ENCODE measurements at regions of chr3 and their contacts with region 1.

Region 1: DNA sequence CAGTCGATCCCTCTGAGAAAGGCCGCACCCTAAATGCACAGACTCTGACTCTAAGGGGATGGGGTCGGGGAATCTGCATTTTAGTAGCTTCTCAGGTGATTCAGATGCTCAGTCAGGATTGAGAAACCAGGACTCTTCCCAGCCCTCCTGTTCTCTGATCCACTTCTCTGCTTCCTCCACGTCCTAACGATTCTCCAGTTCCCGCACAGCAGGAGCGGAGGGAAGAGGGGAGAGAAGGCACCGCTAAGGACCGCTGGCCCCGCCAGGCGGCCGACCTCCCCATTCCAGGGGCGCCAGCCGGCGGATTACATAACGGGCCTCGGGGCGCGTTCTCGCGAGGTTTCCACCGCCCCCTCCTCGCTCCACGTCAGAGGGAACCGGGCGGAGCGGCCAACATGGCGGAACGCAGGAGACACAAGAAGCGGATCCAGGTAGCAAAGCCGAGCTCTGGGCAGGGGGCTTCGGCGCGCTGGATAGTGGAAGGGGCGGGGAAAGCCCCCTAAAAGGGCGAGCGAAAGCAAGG is at the start of gene SEC62:
- DNase-seq: peak; percentile 93 to 95 (median 94)
- H3K4me3 ChIP-seq: peak within 1 kb of the TSS; percentile 78 to 88 (median 81)
- H3K4me3 Mint-ChIP-seq: peak within 1 kb of the TSS; percentile 93 to 94
- H3K27ac ChIP-seq: peak within 1 kb of the TSS; percentile 95 to 98
- H3K27ac Mint-ChIP-seq: peak within 1 kb of the TSS; percentile 96 to 99 (median 98)
- H3K4me1 ChIP-seq: peaks cover 27 to 36% of the 10 kb centered on the region in 2 donors
- H3K4me1 Mint-ChIP-seq: peaks cover 46% of the 10 kb centered on the region
- H3K27me3 ChIP-seq: no peaks in the 10 kb centered on the region
- H3K27me3 Mint-ChIP-seq: peaks cover 0 to 2% (median 2%) of the 10 kb centered on the region in 3 donors
- CTCF ChIP-seq: peak; percentile 59
- polyA plus RNA-seq, gene SEC62: 15.6 to 117 (median 95.2) TPM

Region 2: DNA sequence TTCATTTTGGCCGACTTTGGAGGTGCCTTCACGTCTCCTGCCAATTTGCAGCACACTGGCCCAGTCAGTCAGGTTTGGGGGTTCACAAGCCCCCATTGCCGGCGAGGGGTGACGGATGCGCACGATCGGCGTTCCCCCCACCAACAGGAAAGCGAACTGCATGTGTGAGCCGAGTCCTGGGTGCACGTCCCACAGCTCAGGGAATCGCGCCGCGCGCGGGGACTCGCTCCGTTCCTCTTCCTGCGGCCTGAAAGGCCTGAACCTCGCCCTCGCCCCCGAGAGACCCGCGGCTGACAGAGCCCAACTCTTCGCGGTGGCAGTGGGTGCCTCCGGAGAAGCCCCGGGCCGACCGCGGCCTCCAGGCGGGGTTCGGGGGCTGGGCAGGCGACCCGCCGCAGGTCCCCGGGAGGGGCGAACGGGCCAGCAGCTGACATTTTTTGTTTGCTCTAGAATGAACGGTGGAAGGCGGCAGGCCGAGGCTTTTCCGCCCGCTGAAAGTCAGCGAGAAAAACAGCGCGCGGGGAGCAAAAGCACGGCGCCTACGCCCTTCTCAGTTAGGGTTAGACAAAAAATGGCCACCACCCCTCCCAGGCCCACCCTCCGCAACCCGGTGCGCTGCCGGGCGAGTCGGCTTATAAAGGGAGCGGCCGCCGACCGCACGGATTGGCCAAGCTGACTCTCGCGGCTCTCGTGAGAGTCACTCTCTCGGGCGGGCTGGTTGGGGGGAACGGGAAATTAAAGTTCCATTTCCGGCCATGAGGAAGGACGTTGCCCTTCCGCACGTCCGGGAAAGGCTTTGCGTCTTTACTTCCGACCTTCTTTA is 201.8 kb before region 1 on chr3 and contains the start of gene TERC:
- intact Hi-C with region 1: loop called (anchors 5 to 10 kb)
- DNase-seq: peak; percentile 80 to 89 (median 81)
- H3K4me3 ChIP-seq: peak within 1 kb of the TSS; percentile 70 to 95 (median 79)
- H3K4me3 Mint-ChIP-seq: peak within 1 kb of the TSS; percentile 98 to 99
- H3K27ac ChIP-seq: peak within 1 kb of the TSS; percentile 88 to 93
- H3K27ac Mint-ChIP-seq: peak within 1 kb of the TSS; percentile 91 to 99 (median 96)
- H3K4me1 ChIP-seq: peaks cover 12 to 14% of the 10 kb centered on the region in 2 donors
- H3K4me1 Mint-ChIP-seq: peaks cover 12% of the 10 kb centered on the region
- H3K27me3 ChIP-seq: no peaks in the 10 kb centered on the region
- H3K27me3 Mint-ChIP-seq: peaks cover 2 to 6% (median 3%) of the 10 kb centered on the region in 3 donors
- CTCF ChIP-seq: no peak
- polyA plus RNA-seq, gene TERC: 0.33 to 0.76 TPM in 2 of 3 donors, not detected in the other

Region 3: DNA sequence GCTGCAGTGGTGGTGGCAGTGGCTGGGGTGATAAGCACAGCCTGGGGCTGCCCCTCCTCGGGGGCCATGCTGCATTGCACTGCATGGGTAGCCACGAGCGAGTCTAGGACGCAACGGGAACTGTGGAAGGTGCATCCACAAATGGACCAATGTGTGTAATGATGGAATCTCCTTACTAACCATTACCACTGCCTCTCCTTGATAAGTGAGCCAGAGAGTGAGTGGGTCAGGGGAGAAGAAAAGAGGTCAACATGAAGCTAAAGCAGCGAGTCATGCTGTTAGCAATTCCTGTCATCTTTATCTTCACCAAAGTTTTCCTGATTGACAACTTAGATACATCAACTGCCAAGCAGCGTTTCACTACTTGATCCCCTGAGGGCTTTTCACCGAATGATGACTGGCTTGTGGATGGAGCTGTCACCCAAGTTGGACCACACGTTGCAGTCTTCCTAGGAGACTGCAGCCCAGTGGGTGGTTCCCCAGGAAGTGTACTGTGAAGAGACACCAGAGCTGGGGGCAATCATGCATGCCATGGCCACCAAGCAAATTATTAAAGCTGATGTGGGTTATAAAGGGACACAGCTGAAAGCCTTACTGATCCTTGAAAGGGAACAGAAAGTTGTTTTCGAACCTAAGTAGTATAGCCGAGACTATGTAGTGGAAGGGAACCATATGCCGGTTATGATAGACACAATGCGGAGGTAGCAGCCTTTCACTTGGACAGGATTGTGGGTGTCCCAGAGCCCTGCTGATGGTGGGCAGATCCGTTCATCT is 34.6 kb before region 1 on chr3:
- intact Hi-C with region 1: loop called (anchors 5 kb)
- DNase-seq: no peak
- H3K4me3 ChIP-seq: no peak overlapping the region
- H3K4me3 Mint-ChIP-seq: no peak overlapping the region
- H3K27ac ChIP-seq: no peak overlapping the region
- H3K27ac Mint-ChIP-seq: no peak overlapping the region
- H3K4me1 ChIP-seq: peaks cover 0 to 3% of the 10 kb centered on the region in 2 donors
- H3K4me1 Mint-ChIP-seq: peaks cover 4% of the 10 kb centered on the region
- H3K27me3 ChIP-seq: no peaks in the 10 kb centered on the region
- H3K27me3 Mint-ChIP-seq: peaks cover 0 to 10% (median 2%) of the 10 kb centered on the region in 3 donors
- CTCF ChIP-seq: no peak